Activated B cell treated with CpG ODN at 0.5 μM for 24 hours (primary cell): ENCODE measurements at regions of chr3 and their contacts with region 1.

Region 1: GRCh38 chr3:50154840-50155474 is at the start of gene SEMA3F:
- DNase-seq: peak; percentile 63
- ATAC-seq: peak; percentile 92
- H3K4me3 Mint-ChIP-seq: peak within 1 kb of the TSS; percentile 79
- H3K27ac Mint-ChIP-seq: no peak within 1 kb of the TSS
- H3K4me1 Mint-ChIP-seq: peaks cover 13% of the 10 kb centered on the region
- H3K27me3 Mint-ChIP-seq: peaks cover 34% of the 10 kb centered on the region
- CTCF ChIP-seq: no peak
- total RNA-seq, gene SEMA3F: 0.34 TPM in 1 of 2 replicates, not detected in the other

Region 2: DNA sequence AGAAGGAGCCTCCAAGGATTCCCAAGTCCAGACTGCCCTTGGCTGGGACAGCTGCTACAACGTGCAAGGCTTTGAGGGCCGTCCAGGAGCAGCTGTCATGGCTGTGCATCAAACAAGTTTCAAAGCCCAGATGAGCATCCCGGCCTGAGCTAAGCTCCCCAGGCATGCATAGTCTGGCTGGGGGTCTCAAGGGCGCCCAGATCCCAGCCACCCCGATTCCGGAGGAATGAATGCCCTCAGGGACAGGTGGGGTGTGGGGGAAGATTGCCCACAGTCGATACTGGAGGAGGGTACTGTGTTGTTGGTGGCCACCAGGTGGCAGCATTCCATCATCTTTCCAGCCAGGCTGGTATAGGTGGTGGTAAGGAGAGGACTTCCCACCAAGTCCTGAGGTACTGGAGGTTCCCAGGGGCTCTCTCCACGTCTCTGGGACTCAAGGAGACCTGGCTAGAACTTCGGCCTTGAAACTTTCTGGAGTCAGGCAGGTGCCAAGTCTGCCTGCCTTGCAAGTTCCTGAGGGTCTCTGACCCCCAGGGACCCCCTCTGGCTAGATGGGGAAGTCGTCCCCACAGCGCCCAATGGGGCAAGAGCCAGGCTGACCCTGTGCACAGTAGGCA is 33.4 kb before region 1 on chr3:
- CTCF ChIA-PET with region 1: interaction called, 4 read pairs
- POLR2A ChIA-PET with region 1: no interaction called
- intact Hi-C with region 1: loop called (anchors 1 kb)
- DNase-seq: peak; percentile 61
- ATAC-seq: peak; percentile 88
- H3K4me3 Mint-ChIP-seq: no peak overlapping the region
- H3K27ac Mint-ChIP-seq: no peak overlapping the region
- H3K4me1 Mint-ChIP-seq: no peaks in the 10 kb centered on the region
- H3K27me3 Mint-ChIP-seq: no peaks in the 10 kb centered on the region
- CTCF ChIP-seq: peak; percentile 21